CD8-positive, alpha-beta T cell (primary cell): ENCODE measurements at regions of chr3 and their contacts with region 1.

Region 1: DNA sequence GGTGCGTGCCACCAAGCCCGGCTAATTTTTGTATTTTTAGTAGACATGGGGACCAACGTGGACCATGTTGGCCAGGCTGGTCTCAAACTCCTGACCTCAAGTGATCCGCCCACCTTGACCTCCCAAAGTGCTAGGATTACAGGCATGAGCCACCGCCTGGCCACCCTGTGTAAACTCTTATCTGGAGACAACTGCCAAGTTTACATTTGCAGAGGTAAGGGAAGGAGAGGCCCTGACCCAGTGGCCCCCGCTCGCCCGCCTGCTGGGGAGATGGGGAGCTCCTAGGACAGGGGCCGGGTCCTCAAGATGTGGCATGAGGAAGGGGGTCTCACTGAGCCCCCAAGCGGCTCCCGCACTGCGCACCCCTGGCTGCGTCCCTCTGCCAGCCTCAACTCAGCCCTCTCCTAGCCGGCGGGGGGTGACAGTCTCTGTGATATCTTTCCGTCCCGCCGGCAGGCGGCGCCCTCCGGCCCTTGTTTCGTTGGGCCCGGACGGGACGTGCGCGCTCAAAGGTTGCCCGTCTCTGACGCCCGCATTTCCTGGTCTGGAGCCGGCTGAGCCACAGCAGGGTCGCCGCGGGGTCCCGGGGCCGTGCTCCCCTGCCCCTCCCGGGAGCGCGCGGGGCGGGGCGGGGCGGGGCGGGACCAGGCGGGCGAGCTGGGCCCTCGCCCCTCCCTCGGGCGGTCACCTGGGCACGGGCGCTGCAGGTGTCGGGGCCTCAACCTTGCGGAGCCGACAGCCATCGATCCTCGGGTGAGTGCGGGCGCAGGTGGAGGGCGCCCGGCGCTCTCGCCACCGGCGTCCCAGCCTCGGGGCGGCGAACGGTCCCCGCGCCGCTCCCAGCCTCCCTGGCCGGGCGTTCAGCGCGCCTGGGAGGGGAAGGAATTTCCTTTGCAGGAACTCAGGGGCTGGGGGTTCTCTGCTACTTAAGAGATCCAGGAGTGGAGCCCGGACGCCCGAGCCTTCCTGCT is at the start of gene GPR160:
- DNase-seq: peak; percentile 61 to 89 (median 81)
- ATAC-seq: peak; percentile 73
- H3K4me3 ChIP-seq: peak within 1 kb of the TSS; percentile 73 to 82
- H3K4me3 Mint-ChIP-seq: peak within 1 kb of the TSS; percentile 88
- H3K27ac ChIP-seq: peak within 1 kb of the TSS in 1 of 2 experiments; percentile 45
- H3K27ac Mint-ChIP-seq: peak within 1 kb of the TSS; percentile 71
- H3K4me1 ChIP-seq: peaks cover 32% of the 10 kb centered on the region
- H3K4me1 Mint-ChIP-seq: peaks cover 22% of the 10 kb centered on the region
- H3K27me3 ChIP-seq: no peaks in the 10 kb centered on the region
- H3K27me3 Mint-ChIP-seq: no peaks in the 10 kb centered on the region
- CTCF ChIP-seq: peak; percentile 87
- total RNA-seq, gene GPR160: 2.9 to 3.7 TPM

Region 2: DNA sequence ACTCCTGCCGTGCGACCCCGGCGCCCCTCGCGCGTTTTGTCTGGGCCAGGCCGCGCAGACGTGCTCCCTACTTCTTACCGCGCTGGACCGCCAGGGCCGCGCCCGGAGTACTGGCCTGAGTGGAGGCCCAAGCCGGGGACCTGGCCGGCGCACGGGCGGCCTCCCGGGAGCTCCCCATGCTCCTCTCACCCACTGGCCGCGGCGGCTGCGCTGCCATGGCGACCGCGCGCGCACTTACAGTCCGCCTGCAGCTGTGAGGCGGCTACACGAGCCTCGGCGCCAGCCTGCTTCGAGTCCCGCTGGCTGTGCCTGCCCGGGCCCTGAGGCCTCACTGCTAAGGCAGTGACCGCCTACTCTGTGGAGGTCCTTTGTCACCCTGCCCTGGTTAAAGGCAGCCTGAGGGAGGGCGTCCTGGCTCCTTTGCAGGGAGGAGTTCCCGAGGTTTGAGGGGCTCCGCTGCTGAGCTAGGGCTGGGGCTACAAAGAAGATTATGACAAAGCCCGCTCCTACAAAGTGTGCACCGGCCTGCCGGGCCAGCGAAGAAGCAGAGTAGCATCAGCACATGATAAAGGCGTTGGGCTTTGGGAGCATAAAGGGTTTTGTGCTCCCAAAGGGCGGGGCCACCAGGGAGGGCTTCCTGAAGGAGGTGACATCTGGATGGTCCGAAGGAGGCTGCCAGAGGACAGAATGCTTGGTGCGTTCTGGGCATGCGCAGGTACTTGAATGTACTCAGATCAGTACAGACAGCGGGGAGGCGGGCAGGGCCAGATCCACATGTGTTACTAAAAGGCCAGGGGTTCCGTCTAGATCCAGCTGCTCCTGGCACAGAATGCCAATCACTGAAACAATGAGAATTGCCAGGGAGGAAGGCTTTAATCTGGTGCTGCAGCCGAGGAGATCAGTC is 225.2 kb before region 1 on chr3 and contains the starts of genes LRRC34 and LRRIQ4:
- CTCF ChIA-PET with region 1: no interaction called
- POLR2A ChIA-PET with region 1: no interaction called
- intact Hi-C with region 1: loop called in 1 of 2 experiments (anchors 2 kb)
- DNase-seq: peak; percentile 12 to 79 (median 68)
- ATAC-seq: peak; percentile 37
- H3K4me3 ChIP-seq: peak within 1 kb of the TSS; percentile 47 to 54
- H3K4me3 Mint-ChIP-seq: peak within 1 kb of the TSS; percentile 89
- H3K27ac ChIP-seq: peak within 1 kb of the TSS; percentile 2
- H3K27ac Mint-ChIP-seq: peak within 1 kb of the TSS; percentile 74
- H3K4me1 ChIP-seq: peaks cover 16% of the 10 kb centered on the region
- H3K4me1 Mint-ChIP-seq: peaks cover 28% of the 10 kb centered on the region
- H3K27me3 ChIP-seq: no peaks in the 10 kb centered on the region
- H3K27me3 Mint-ChIP-seq: no peaks in the 10 kb centered on the region
- CTCF ChIP-seq: no peak
- total RNA-seq, gene LRRC34: 0.36 to 0.54 TPM
- total RNA-seq, gene LRRIQ4: not detected

Region 3: DNA sequence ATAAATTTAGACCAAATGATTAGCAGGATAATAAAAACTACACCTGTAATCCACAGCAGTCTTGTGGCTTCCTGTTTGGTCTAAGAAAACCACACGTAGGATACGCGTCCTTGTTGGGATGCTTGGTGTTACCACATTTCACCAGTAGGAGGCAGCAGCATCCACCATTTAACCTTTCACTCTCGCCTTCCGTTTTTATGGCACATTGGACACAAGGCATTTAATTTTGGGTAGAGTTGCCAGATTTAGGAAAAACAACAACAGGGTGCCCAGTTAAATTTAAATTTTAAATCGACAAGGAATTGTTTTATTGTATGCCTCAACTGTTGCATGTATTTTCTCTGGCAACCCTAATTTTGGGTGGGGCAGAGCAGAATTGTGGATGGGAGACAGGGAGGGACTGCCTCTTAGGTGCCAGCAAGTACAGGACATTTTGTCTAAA is 174.3 kb before region 1 on chr3:
- CTCF ChIA-PET with region 1: interaction called, 4 read pairs
- POLR2A ChIA-PET with region 1: no interaction called
- intact Hi-C with region 1: loop called (anchors 5 kb)
- DNase-seq: peak; percentile 21 to 82 (median 59)
- ATAC-seq: peak; percentile 69
- H3K4me3 ChIP-seq: no peak overlapping the region
- H3K4me3 Mint-ChIP-seq: no peak overlapping the region
- H3K27ac ChIP-seq: no peak overlapping the region
- H3K27ac Mint-ChIP-seq: no peak overlapping the region
- H3K4me1 ChIP-seq: peaks cover 15% of the 10 kb centered on the region
- H3K4me1 Mint-ChIP-seq: peaks cover 20% of the 10 kb centered on the region
- H3K27me3 ChIP-seq: peaks cover 0 to 4% of the 10 kb centered on the region in 2 experiments
- H3K27me3 Mint-ChIP-seq: peaks cover 5% of the 10 kb centered on the region
- CTCF ChIP-seq: peak; percentile 95

Region 4: GRCh38 chr3:170055209-170055608 is 17.5 kb after region 1 on chr3:
- CTCF ChIA-PET with region 1: interaction called, 4 read pairs
- POLR2A ChIA-PET with region 1: no interaction called
- intact Hi-C with region 1: loop called in 1 of 2 experiments (anchors 2 kb)
- DNase-seq: no peak
- ATAC-seq: no peak
- H3K4me3 ChIP-seq: no peak overlapping the region
- H3K4me3 Mint-ChIP-seq: no peak overlapping the region
- H3K27ac ChIP-seq: no peak overlapping the region
- H3K27ac Mint-ChIP-seq: no peak overlapping the region
- H3K4me1 ChIP-seq: peaks cover 11% of the 10 kb centered on the region
- H3K4me1 Mint-ChIP-seq: peaks cover 7% of the 10 kb centered on the region
- H3K27me3 ChIP-seq: no peaks in the 10 kb centered on the region
- H3K27me3 Mint-ChIP-seq: no peaks in the 10 kb centered on the region
- CTCF ChIP-seq: no peak

Region 5: DNA sequence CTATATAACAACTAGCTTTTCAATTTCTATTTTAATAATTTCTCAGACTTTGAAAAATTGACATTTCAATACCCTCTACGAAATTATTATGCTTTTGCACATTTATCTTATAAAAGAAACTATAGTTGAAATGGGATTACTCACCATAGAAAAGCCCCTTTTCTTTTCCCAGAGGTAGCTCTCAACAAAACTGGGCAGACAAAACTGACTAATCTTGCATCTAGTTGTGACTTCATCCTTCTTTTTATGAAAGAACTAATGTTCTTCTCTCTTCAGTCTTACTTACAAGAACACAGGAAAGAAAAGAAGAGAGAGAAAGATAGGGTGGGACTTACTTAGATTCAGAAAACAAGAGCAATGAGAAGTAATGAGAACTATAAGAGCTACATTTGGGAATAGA is 61.0 kb after region 1 on chr3:
- CTCF ChIA-PET with region 1: no interaction called
- POLR2A ChIA-PET with region 1: no interaction called
- intact Hi-C with region 1: no loop called
- DNase-seq: no peak
- ATAC-seq: no peak
- H3K4me3 ChIP-seq: no peak overlapping the region
- H3K4me3 Mint-ChIP-seq: no peak overlapping the region
- H3K27ac ChIP-seq: no peak overlapping the region
- H3K27ac Mint-ChIP-seq: peak overlapping the region; percentile 68
- H3K4me1 ChIP-seq: no peaks in the 10 kb centered on the region
- H3K4me1 Mint-ChIP-seq: peaks cover 17% of the 10 kb centered on the region
- H3K27me3 ChIP-seq: no peaks in the 10 kb centered on the region
- H3K27me3 Mint-ChIP-seq: no peaks in the 10 kb centered on the region
- CTCF ChIP-seq: no peak

Region 6: GRCh38 chr3:170117134-170117533 is 79.4 kb after region 1 on chr3:
- CTCF ChIA-PET with region 1: no interaction called
- POLR2A ChIA-PET with region 1: no interaction called
- intact Hi-C with region 1: no loop called
- DNase-seq: no peak
- ATAC-seq: no peak
- H3K4me3 ChIP-seq: no peak overlapping the region
- H3K4me3 Mint-ChIP-seq: no peak overlapping the region
- H3K27ac ChIP-seq: no peak overlapping the region
- H3K27ac Mint-ChIP-seq: no peak overlapping the region
- H3K4me1 ChIP-seq: no peaks in the 10 kb centered on the region
- H3K4me1 Mint-ChIP-seq: peaks cover 2% of the 10 kb centered on the region
- H3K27me3 ChIP-seq: no peaks in the 10 kb centered on the region
- H3K27me3 Mint-ChIP-seq: no peaks in the 10 kb centered on the region
- CTCF ChIP-seq: no peak

Region 7: GRCh38 chr3:170357176-170357919 is 319.6 kb after region 1 on chr3 and contains the start of gene SKIL:
- CTCF ChIA-PET with region 1: no interaction called
- POLR2A ChIA-PET with region 1: no interaction called
- intact Hi-C with region 1: loop called (anchors 1 to 5 kb)
- DNase-seq: peak; percentile 94 to 99 (median 97)
- ATAC-seq: peak; percentile 69
- H3K4me3 ChIP-seq: peak within 1 kb of the TSS; percentile 55 to 76
- H3K4me3 Mint-ChIP-seq: peak within 1 kb of the TSS; percentile 95
- H3K27ac ChIP-seq: peak within 1 kb of the TSS; percentile 91 to 96
- H3K27ac Mint-ChIP-seq: peak within 1 kb of the TSS; percentile 99
- H3K4me1 ChIP-seq: peaks cover 24% of the 10 kb centered on the region
- H3K4me1 Mint-ChIP-seq: peaks cover 52% of the 10 kb centered on the region
- H3K27me3 ChIP-seq: no peaks in the 10 kb centered on the region
- H3K27me3 Mint-ChIP-seq: no peaks in the 10 kb centered on the region
- CTCF ChIP-seq: no peak
- total RNA-seq, gene SKIL: 160 to 177 TPM

Region 8: GRCh38 chr3:170811928-170812591 is 774.3 kb after region 1 on chr3:
- CTCF ChIA-PET with region 1: interaction called, 3 read pairs
- POLR2A ChIA-PET with region 1: no interaction called
- intact Hi-C with region 1: loop called (anchors 5 to 10 kb)
- DNase-seq: peak; percentile 37 to 78 (median 59)
- ATAC-seq: peak; percentile 98
- H3K4me3 ChIP-seq: no peak overlapping the region
- H3K4me3 Mint-ChIP-seq: no peak overlapping the region
- H3K27ac ChIP-seq: no peak overlapping the region
- H3K27ac Mint-ChIP-seq: no peak overlapping the region
- H3K4me1 ChIP-seq: no peaks in the 10 kb centered on the region
- H3K4me1 Mint-ChIP-seq: no peaks in the 10 kb centered on the region
- H3K27me3 ChIP-seq: peaks cover 0 to 2% of the 10 kb centered on the region in 2 experiments
- H3K27me3 Mint-ChIP-seq: peaks cover 2% of the 10 kb centered on the region
- CTCF ChIP-seq: peak; percentile 87

Region 9: GRCh38 chr3:170869645-170870593 is 832.2 kb after region 1 on chr3 and contains the start of gene RPL22L1:
- CTCF ChIA-PET with region 1: no interaction called
- POLR2A ChIA-PET with region 1: no interaction called
- intact Hi-C with region 1: loop called in 1 of 2 experiments (anchors 5 kb)
- DNase-seq: peak; percentile 85 to 97 (median 93)
- ATAC-seq: peak; percentile 93
- H3K4me3 ChIP-seq: peak within 1 kb of the TSS; percentile 73 to 77
- H3K4me3 Mint-ChIP-seq: peak within 1 kb of the TSS; percentile 94
- H3K27ac ChIP-seq: peak within 1 kb of the TSS; percentile 84 to 94
- H3K27ac Mint-ChIP-seq: peak within 1 kb of the TSS; percentile 97
- H3K4me1 ChIP-seq: peaks cover 27% of the 10 kb centered on the region
- H3K4me1 Mint-ChIP-seq: peaks cover 28% of the 10 kb centered on the region
- H3K27me3 ChIP-seq: no peaks in the 10 kb centered on the region
- H3K27me3 Mint-ChIP-seq: no peaks in the 10 kb centered on the region
- CTCF ChIP-seq: no peak
- total RNA-seq, gene RPL22L1: 54.3 to 56.8 TPM